Posterior cingulate gyrus (tissue), 11 donors: ENCODE measurements at regions of chr10 and their contacts with region 1.

Region 1: DNA sequence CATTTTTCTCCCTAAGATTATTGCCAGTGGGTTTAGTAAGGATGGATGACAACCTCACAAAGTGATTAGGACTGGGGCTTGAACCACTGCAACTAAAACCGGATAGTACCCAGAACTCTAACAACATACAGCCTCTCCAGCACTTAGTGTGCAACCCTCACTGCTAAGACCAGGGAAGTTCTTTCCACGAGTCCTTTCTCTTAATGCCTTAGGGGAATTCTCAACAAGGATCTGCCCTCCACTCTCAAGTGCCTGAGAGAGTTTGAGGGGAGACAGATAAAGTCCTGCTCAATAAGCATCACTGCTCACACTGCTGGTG is 104.6 kb downstream of the NRP1 start:
- DNase-seq: no peak

Region 2: GRCh38 chr10:33211106-33211878 is 18.6 kb before region 1 on chr10:
- intact Hi-C with region 1: loop called (anchors 2 kb)
- DNase-seq: peak in 4 of 10 donors; percentile 15 to 83 (median 36)